ENCODE measurements at regions of chr3 and their contacts with region 1.

Region 1: GRCh38 chr3:64533617-64534317 is 154.0 kb downstream of the ADAMTS9 start:
- DNase-seq: peak; percentile 23
- H3K4me3 Mint-ChIP-seq: no peak overlapping the region
- H3K27ac Mint-ChIP-seq: no peak overlapping the region
- H3K4me1 Mint-ChIP-seq: no peaks in the 10 kb centered on the region
- H3K27me3 Mint-ChIP-seq: peaks cover 5% of the 10 kb centered on the region

Region 2: GRCh38 chr3:65732051-65732935 is 1198.5 kb after region 1 on chr3:
- intact Hi-C with region 1: loop called (anchors 10 kb)
- DNase-seq: no peak
- H3K4me3 Mint-ChIP-seq: no peak overlapping the region
- H3K27ac Mint-ChIP-seq: no peak overlapping the region
- H3K4me1 Mint-ChIP-seq: no peaks in the 10 kb centered on the region
- H3K27me3 Mint-ChIP-seq: no peaks in the 10 kb centered on the region

Measured in activated T-helper 2 cell treated with anti-CD3 and anti-CD28 coated beads, Interferon-gamma antibody, Interleukin-2, Interleukin-4, amounts not matched to agents 10 μg/mL and 5 μg/mL and 100 μg/mL, durations not matched to agents 14 hours and 24 hours and 36 hours (primary cell).